ENCODE measurements at regions of chr17 and their contacts with region 1.

Region 1: DNA sequence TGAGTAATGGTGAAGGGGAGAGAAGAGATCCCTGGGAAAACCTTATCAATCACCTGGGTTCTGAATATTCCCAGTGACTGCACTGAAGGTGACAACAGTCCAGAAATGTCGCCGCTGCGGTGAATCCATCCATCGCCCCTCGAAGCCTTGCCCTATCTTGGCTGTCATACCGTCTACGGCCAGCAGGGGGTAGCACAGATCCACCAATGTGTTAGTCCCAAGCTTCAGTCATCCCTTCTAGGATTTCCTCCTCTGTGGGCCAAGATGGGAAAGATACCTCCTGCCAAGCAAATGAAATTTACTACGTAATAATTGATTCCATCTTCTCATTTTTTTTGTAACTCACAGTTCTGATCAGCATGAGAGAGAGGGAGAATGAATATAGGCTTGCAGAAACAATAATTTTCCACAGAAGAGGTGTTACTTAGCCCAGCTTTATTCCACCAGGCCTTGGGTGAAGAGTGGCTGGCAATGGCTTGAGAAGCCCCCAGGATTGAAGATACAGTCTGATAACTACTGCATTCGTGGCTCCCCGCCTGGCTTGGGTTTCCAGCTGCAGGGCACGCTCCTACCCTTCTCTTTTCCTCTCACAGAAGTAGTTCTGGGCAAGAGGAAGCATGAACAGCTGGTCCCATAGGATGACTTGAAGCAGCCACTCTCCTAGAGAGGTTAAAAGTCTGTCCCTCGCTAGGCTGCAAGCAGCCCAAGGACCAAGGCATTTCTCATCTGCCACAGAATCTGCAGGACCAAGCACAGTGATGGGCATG is 2.6 kb upstream of the FMNL1 start:
- DNase-seq: peak; percentile 77 to 84 (median 82)
- H3K4me3 ChIP-seq: peak overlapping the region in 1 of 2 donors; percentile 13
- H3K4me3 Mint-ChIP-seq: peak overlapping the region; percentile 88 to 95 (median 92)
- H3K27ac ChIP-seq: peak overlapping the region; percentile 12
- H3K27ac Mint-ChIP-seq: peak overlapping the region; percentile 84 to 94 (median 91)
- H3K4me1 ChIP-seq: peaks cover 29% of the 10 kb centered on the region
- H3K4me1 Mint-ChIP-seq: peaks cover 21 to 49% (median 24%) of the 10 kb centered on the region in 4 donors
- H3K27me3 ChIP-seq: no peaks in the 10 kb centered on the region
- H3K27me3 Mint-ChIP-seq: no peaks in the 10 kb centered on the region

Region 2: GRCh38 chr17:44781553-44782495 is 437.3 kb before region 1 on chr17:
- CTCF ChIA-PET with region 1: no interaction called
- POLR2A ChIA-PET with region 1: no interaction called
- intact Hi-C with region 1: no loop called
- DNase-seq: no peak
- H3K4me3 ChIP-seq: no peak overlapping the region
- H3K4me3 Mint-ChIP-seq: no peak overlapping the region
- H3K27ac ChIP-seq: no peak overlapping the region
- H3K27ac Mint-ChIP-seq: no peak overlapping the region
- H3K4me1 ChIP-seq: peaks cover 10% of the 10 kb centered on the region
- H3K4me1 Mint-ChIP-seq: peaks cover 3 to 9% (median 6%) of the 10 kb centered on the region in 4 donors
- H3K27me3 ChIP-seq: no peaks in the 10 kb centered on the region
- H3K27me3 Mint-ChIP-seq: peaks cover 2 to 3% of the 10 kb centered on the region in 2 donors

Region 3: GRCh38 chr17:45073414-45074070 is 145.5 kb before region 1 on chr17:
- CTCF ChIA-PET with region 1: no interaction called
- POLR2A ChIA-PET with region 1: no interaction called
- intact Hi-C with region 1: no loop called
- DNase-seq: no peak
- H3K4me3 ChIP-seq: no peak overlapping the region
- H3K4me3 Mint-ChIP-seq: no peak overlapping the region
- H3K27ac ChIP-seq: no peak overlapping the region
- H3K27ac Mint-ChIP-seq: peak overlapping the region in 2 of 7 donors; percentile 55 to 68
- H3K4me1 ChIP-seq: no peaks in the 10 kb centered on the region
- H3K4me1 Mint-ChIP-seq: peaks cover 19 to 37% (median 25%) of the 10 kb centered on the region in 4 donors
- H3K27me3 ChIP-seq: no peaks in the 10 kb centered on the region
- H3K27me3 Mint-ChIP-seq: no peaks in the 10 kb centered on the region

Region 4: DNA sequence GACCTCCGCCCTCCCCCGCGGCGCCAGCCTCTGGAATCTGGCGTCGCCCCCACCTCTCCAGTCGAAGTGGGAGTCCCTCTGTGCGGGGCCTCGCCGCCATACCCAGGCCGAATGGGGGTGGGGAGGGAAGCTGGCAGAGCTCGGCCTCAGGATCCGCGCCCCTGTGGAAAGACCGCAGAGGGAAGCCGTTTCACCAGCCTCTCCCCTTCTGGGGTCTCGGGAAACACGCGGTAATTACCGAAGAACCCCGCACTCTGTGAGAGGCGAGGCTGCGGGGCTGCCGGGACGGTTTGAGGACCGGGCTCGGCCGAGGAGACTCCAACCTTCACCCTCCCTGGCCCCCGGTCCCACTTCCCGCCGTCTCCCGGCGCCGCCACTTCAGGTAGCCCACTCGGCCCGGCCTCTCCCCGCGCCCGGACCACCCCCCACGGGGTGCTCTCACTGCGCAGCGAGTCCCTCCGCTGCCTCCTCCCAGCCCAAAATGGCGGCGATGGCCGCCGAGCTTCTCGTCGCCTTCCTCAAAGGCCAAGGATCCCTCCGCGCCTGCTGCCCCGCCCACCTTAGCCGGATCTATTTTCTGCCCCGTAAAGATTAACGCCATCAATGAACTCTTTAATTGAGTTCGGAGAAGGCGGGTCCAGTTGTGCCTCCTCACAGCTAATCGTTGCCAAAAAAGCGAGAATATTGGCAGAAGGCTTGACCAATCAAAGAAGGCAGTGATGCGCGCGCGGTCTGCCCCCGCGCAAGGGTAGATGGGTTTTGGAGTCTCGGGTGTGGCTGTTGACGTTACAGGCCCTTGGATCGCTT is 57.9 kb before region 1 on chr17:
- CTCF ChIA-PET with region 1: interaction called, 3 read pairs
- POLR2A ChIA-PET with region 1: interaction called, 21 read pairs
- intact Hi-C with region 1: no loop called
- DNase-seq: peak; percentile 99 to 100 (median 99)
- H3K4me3 ChIP-seq: peak overlapping the region; percentile 72 to 87
- H3K4me3 Mint-ChIP-seq: peak overlapping the region; percentile 85 to 99 (median 98)
- H3K27ac ChIP-seq: peak overlapping the region; percentile 99
- H3K27ac Mint-ChIP-seq: peak overlapping the region; percentile 90 to 100 (median 98)
- H3K4me1 ChIP-seq: peaks cover 33% of the 10 kb centered on the region
- H3K4me1 Mint-ChIP-seq: peaks cover 19 to 52% (median 39%) of the 10 kb centered on the region in 4 donors
- H3K27me3 ChIP-seq: no peaks in the 10 kb centered on the region
- H3K27me3 Mint-ChIP-seq: no peaks in the 10 kb centered on the region

Region 5: GRCh38 chr17:45256114-45256966 is 37.3 kb after region 1 on chr17:
- CTCF ChIA-PET with region 1: interaction called, 20 read pairs
- POLR2A ChIA-PET with region 1: interaction called, 1,143 read pairs
- intact Hi-C with region 1: no loop called
- DNase-seq: no peak
- H3K4me3 ChIP-seq: no peak overlapping the region
- H3K4me3 Mint-ChIP-seq: peak overlapping the region in 4 of 8 donors; percentile 7 to 57 (median 28)
- H3K27ac ChIP-seq: no peak overlapping the region
- H3K27ac Mint-ChIP-seq: peak overlapping the region; percentile 16 to 81 (median 57)
- H3K4me1 ChIP-seq: peaks cover 36% of the 10 kb centered on the region
- H3K4me1 Mint-ChIP-seq: peaks cover 27 to 71% (median 44%) of the 10 kb centered on the region in 4 donors
- H3K27me3 ChIP-seq: no peaks in the 10 kb centered on the region
- H3K27me3 Mint-ChIP-seq: no peaks in the 10 kb centered on the region

Region 6: GRCh38 chr17:45270828-45271418 is 51.8 kb after region 1 on chr17:
- CTCF ChIA-PET with region 1: interaction called, 96 read pairs
- POLR2A ChIA-PET with region 1: interaction called, 17 read pairs
- intact Hi-C with region 1: loop called (anchors 1 kb)
- DNase-seq: peak; percentile 38 to 60 (median 41)
- H3K4me3 ChIP-seq: no peak overlapping the region
- H3K4me3 Mint-ChIP-seq: no peak overlapping the region
- H3K27ac ChIP-seq: no peak overlapping the region
- H3K27ac Mint-ChIP-seq: peak overlapping the region in 4 of 7 donors; percentile 22 to 31 (median 26)
- H3K4me1 ChIP-seq: no peaks in the 10 kb centered on the region
- H3K4me1 Mint-ChIP-seq: no peaks in the 10 kb centered on the region
- H3K27me3 ChIP-seq: no peaks in the 10 kb centered on the region
- H3K27me3 Mint-ChIP-seq: no peaks in the 10 kb centered on the region

Region 7: GRCh38 chr17:45284176-45285140 is 65.4 kb after region 1 on chr17:
- CTCF ChIA-PET with region 1: interaction called, 10 read pairs
- POLR2A ChIA-PET with region 1: no interaction called
- intact Hi-C with region 1: no loop called
- DNase-seq: peak in 1 of 5 donors; percentile 15
- H3K4me3 ChIP-seq: no peak overlapping the region
- H3K4me3 Mint-ChIP-seq: no peak overlapping the region
- H3K27ac ChIP-seq: no peak overlapping the region
- H3K27ac Mint-ChIP-seq: peak overlapping the region in 5 of 7 donors; percentile 68 to 78 (median 75)
- H3K4me1 ChIP-seq: no peaks in the 10 kb centered on the region
- H3K4me1 Mint-ChIP-seq: peaks cover 0 to 2% (median 1%) of the 10 kb centered on the region in 4 donors
- H3K27me3 ChIP-seq: no peaks in the 10 kb centered on the region
- H3K27me3 Mint-ChIP-seq: no peaks in the 10 kb centered on the region

Region 8: GRCh38 chr17:45385331-45385997 is 166.4 kb after region 1 on chr17:
- CTCF ChIA-PET with region 1: interaction called, 51 read pairs
- POLR2A ChIA-PET with region 1: interaction called, 15 read pairs
- intact Hi-C with region 1: loop called (anchors 1 kb)
- DNase-seq: peak; percentile 80 to 86 (median 82)
- H3K4me3 ChIP-seq: no peak overlapping the region
- H3K4me3 Mint-ChIP-seq: peak overlapping the region in 1 of 8 donors; percentile 11
- H3K27ac ChIP-seq: no peak overlapping the region
- H3K27ac Mint-ChIP-seq: peak overlapping the region in 3 of 7 donors; percentile 32 to 68 (median 50)
- H3K4me1 ChIP-seq: peaks cover 4% of the 10 kb centered on the region
- H3K4me1 Mint-ChIP-seq: peaks cover 0 to 6% (median 4%) of the 10 kb centered on the region in 4 donors
- H3K27me3 ChIP-seq: no peaks in the 10 kb centered on the region
- H3K27me3 Mint-ChIP-seq: peaks cover 5 to 9% of the 10 kb centered on the region in 2 donors

Measured in CD4-positive, alpha-beta memory T cell (primary cell).